ENCODE measurements at regions of chr2 and their contacts with region 1.

Region 1: DNA sequence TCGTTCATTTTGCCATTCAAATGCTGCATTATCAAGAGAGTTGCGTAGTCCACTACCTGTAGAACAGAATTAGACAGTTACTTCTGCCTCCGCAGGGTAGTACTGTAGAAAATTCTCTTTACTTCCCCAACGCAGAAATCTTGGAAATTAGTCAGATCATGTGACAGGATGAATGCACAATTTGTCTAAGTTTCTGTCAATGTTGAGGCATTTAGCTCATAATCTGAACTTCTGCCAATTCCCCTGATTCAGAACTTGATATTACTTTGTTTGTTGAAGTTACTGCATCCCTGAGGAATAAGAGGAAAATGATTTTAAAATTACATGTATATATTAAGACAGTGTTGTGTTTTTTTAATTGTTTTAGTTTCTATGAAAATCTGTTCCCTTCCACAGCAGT is 83.4 kb downstream of the TTC27 start:
- DNase-seq: peak; percentile 90
- ATAC-seq: peak; percentile 86
- H3K4me3 ChIP-seq: no peak overlapping the region
- H3K27ac ChIP-seq: peak overlapping the region; percentile 10
- H3K4me1 ChIP-seq: peaks cover 14% of the 10 kb centered on the region
- H3K27me3 ChIP-seq: no peaks in the 10 kb centered on the region
- CTCF ChIP-seq: no peak

Region 2: DNA sequence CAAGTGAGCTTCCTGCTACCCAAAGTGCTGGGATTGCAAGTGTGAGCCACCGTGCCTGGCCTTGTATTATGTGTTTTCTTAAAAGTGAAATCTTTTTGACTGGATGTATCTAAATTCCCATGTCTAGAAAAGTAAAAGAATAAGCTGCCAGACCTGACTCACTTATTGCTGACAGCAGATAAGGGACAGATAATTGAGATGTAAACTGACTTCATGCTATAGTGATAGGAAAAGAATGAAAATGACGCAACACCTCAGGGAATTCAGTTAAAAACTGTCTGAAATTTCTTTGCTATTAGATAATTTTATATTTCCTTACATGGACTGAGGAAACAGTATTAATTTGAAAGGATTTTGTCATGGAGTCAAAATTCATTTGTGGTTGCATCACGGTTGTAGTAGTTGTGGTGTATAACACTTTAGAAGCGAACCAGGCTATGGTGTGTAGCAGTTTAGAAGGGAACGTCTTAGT is 64.0 kb before region 1 on chr2:
- CTCF ChIA-PET with region 1: no interaction called
- POLR2A ChIA-PET with region 1: interaction called, 33 read pairs
- intact Hi-C with region 1: no loop called
- DNase-seq: no peak
- ATAC-seq: no peak
- H3K4me3 ChIP-seq: no peak overlapping the region
- H3K27ac ChIP-seq: no peak overlapping the region
- H3K4me1 ChIP-seq: no peaks in the 10 kb centered on the region
- H3K27me3 ChIP-seq: no peaks in the 10 kb centered on the region
- CTCF ChIP-seq: no peak

Region 3: GRCh38 chr2:32691678-32692077 is 19.5 kb before region 1 on chr2:
- CTCF ChIA-PET with region 1: no interaction called
- POLR2A ChIA-PET with region 1: no interaction called
- intact Hi-C with region 1: loop called (anchors 2 kb)
- DNase-seq: peak; percentile 81
- ATAC-seq: peak; percentile 52
- H3K4me3 ChIP-seq: no peak overlapping the region
- H3K27ac ChIP-seq: no peak overlapping the region
- H3K4me1 ChIP-seq: peaks cover 23% of the 10 kb centered on the region
- H3K27me3 ChIP-seq: no peaks in the 10 kb centered on the region
- CTCF ChIP-seq: no peak

Region 4: DNA sequence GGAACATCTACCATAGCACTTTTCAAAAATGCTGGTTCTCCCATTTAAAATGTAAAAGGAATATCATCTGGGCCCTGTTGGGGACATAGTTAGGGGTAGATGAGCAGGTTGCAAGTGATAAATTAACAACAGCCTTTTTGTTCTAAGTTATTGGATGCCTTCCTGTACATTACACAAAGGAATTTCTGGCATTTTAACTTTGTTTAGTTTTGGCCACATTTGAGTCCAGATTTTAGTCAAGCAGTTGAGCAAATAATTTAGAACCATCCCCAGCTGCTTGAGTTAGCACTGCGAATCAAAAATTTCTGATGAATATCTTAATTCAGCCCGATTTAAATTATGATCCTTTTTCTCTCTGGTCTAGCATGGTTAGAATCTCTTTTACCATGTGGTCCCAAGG is 41.0 kb after region 1 on chr2:
- CTCF ChIA-PET with region 1: no interaction called
- POLR2A ChIA-PET with region 1: no interaction called
- intact Hi-C with region 1: loop called (anchors 2 kb)
- DNase-seq: peak; percentile 19
- ATAC-seq: peak; percentile 55
- H3K4me3 ChIP-seq: no peak overlapping the region
- H3K27ac ChIP-seq: no peak overlapping the region
- H3K4me1 ChIP-seq: peaks cover 6% of the 10 kb centered on the region; the same call in 1 of the 2 replicates
- H3K27me3 ChIP-seq: no peaks in the 10 kb centered on the region
- CTCF ChIP-seq: no peak

Region 5: GRCh38 chr2:32780961-32781360 is 69.7 kb after region 1 on chr2:
- CTCF ChIA-PET with region 1: no interaction called
- POLR2A ChIA-PET with region 1: no interaction called
- intact Hi-C with region 1: no loop called
- DNase-seq: no peak
- ATAC-seq: no peak
- H3K4me3 ChIP-seq: no peak overlapping the region
- H3K27ac ChIP-seq: no peak overlapping the region
- H3K4me1 ChIP-seq: no peaks in the 10 kb centered on the region
- H3K27me3 ChIP-seq: no peaks in the 10 kb centered on the region
- CTCF ChIP-seq: no peak